Aorta (tissue), 5 donors: ENCODE measurements at regions of chr11 and their contacts with region 1.

Region 1: GRCh38 chr11:66069715-66070603 is at the start of gene PACS1:
- DNase-seq: peak; percentile 92 to 94
- ATAC-seq: peak; percentile 89
- H3K4me3 ChIP-seq: peak within 1 kb of the TSS; percentile 69 to 85
- H3K27ac ChIP-seq: peak within 1 kb of the TSS; percentile 78 to 98
- H3K4me1 ChIP-seq: no peaks in the 10 kb centered on the region
- H3K27me3 ChIP-seq: no peaks in the 10 kb centered on the region
- total RNA-seq, gene PACS1: 85.7 to 119 TPM

Region 2: DNA sequence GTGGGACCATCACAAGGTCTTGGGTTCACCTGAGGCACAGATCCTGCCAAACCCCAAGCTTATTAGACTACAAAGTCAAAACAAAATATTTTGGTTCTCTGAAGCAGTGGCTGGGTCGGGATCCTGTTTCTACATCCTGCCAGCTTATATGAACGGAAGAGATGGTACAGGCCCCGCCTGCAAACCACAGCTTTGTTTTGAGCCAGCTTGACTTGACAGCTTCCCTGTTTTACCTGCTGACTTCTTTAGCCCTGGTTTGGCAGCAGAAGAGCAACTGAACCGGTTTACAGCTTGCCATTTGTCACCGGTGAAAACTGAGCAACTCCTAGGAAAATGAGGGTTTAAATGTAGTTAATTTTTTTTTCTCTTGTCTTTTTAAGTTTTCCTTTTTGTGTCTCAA is 11.5 kb after region 1 on chr11:
- intact Hi-C with region 1: no loop called
- DNase-seq: peak in 1 of 2 donors; percentile 77
- ATAC-seq: no peak
- H3K4me3 ChIP-seq: no peak overlapping the region
- H3K27ac ChIP-seq: peak overlapping the region in 1 of 2 donors; percentile 29
- H3K4me1 ChIP-seq: peaks cover 5 to 12% of the 10 kb centered on the region in 2 donors
- H3K27me3 ChIP-seq: no peaks in the 10 kb centered on the region

Region 3: GRCh38 chr11:66133216-66133775 is 63.3 kb after region 1 on chr11:
- intact Hi-C with region 1: loop called in 1 of 2 experiments (anchors 5 kb)
- DNase-seq: no peak
- ATAC-seq: no peak
- H3K4me3 ChIP-seq: no peak overlapping the region
- H3K27ac ChIP-seq: no peak overlapping the region
- H3K4me1 ChIP-seq: peaks cover 2 to 5% of the 10 kb centered on the region in 2 donors
- H3K27me3 ChIP-seq: no peaks in the 10 kb centered on the region

Region 4: GRCh38 chr11:66268283-66268951 is 198.5 kb after region 1 on chr11 and contains the start of gene RAB1B:
- intact Hi-C with region 1: loop called in 1 of 2 experiments (anchors 10 kb)
- DNase-seq: peak; percentile 100
- ATAC-seq: peak; percentile 95
- H3K4me3 ChIP-seq: peak within 1 kb of the TSS; percentile 59 to 81
- H3K27ac ChIP-seq: peak within 1 kb of the TSS; percentile 68 to 95
- H3K4me1 ChIP-seq: peaks cover 0 to 2% of the 10 kb centered on the region in 2 donors
- H3K27me3 ChIP-seq: no peaks in the 10 kb centered on the region
- total RNA-seq, gene RAB1B: 102 to 111 TPM

Region 5: GRCh38 chr11:66659763-66660162 is 589.8 kb after region 1 on chr11:
- intact Hi-C with region 1: no loop called
- DNase-seq: no peak
- ATAC-seq: no peak
- H3K4me3 ChIP-seq: no peak overlapping the region
- H3K27ac ChIP-seq: no peak overlapping the region
- H3K4me1 ChIP-seq: no peaks in the 10 kb centered on the region
- H3K27me3 ChIP-seq: no peaks in the 10 kb centered on the region